ENCODE measurements at regions of chr16 and their contacts with region 1.

Region 1: GRCh38 chr16:79257953-79258490 is 342.5 kb downstream of the MAF start:
- DNase-seq: no peak
- ATAC-seq: no peak
- H3K4me3 ChIP-seq: no peak overlapping the region
- H3K4me3 Mint-ChIP-seq: no peak overlapping the region
- H3K27ac ChIP-seq: no peak overlapping the region
- H3K27ac Mint-ChIP-seq: no peak overlapping the region
- H3K4me1 ChIP-seq: no peaks in the 10 kb centered on the region
- H3K4me1 Mint-ChIP-seq: no peaks in the 10 kb centered on the region
- H3K27me3 ChIP-seq: no peaks in the 10 kb centered on the region
- H3K27me3 Mint-ChIP-seq: peaks cover 23% of the 10 kb centered on the region
- CTCF ChIP-seq: no peak

Region 2: GRCh38 chr16:79316004-79316458 is 58.0 kb after region 1 on chr16:
- CTCF ChIA-PET with region 1: no interaction called
- POLR2A ChIA-PET with region 1: no interaction called
- intact Hi-C with region 1: loop called in 1 of 2 experiments (anchors 2 kb)
- DNase-seq: peak in 2 of 9 experiments; percentile 17 to 26
- ATAC-seq: peak; percentile 58
- H3K4me3 ChIP-seq: no peak overlapping the region
- H3K4me3 Mint-ChIP-seq: peak overlapping the region; percentile 15
- H3K27ac ChIP-seq: no peak overlapping the region
- H3K27ac Mint-ChIP-seq: no peak overlapping the region
- H3K4me1 ChIP-seq: no peaks in the 10 kb centered on the region
- H3K4me1 Mint-ChIP-seq: peaks cover 9% of the 10 kb centered on the region
- H3K27me3 ChIP-seq: peaks cover 0 to 4% of the 10 kb centered on the region in 2 experiments
- H3K27me3 Mint-ChIP-seq: peaks cover 29% of the 10 kb centered on the region
- CTCF ChIP-seq: no peak